ENCODE measurements at regions of chr6 and their contacts with region 1.

Region 1: GRCh38 chr6:53725791-53726431 is 60.4 kb upstream of the KLHL31 start:
- DNase-seq: peak; percentile 87

Region 2: GRCh38 chr6:53752856-53753255 is 26.9 kb after region 1 on chr6:
- intact Hi-C with region 1: no loop called
- DNase-seq: no peak

Region 3: GRCh38 chr6:53956068-53956711 is 230.3 kb after region 1 on chr6:
- intact Hi-C with region 1: loop called (anchors 5 kb)
- DNase-seq: peak; percentile 81